Activated T-helper 1 cell treated with anti-CD3 and anti-CD28 coated beads, Interleukin-12 subunit alpha, Interleukin-12 subunit beta, Interleukin-2, Interleukin-4 antibody, amounts not matched to agents 30 ng/mL and 10 ng/mL and 1 ng/mL, durations not matched to agents 14 hours and 24 hours and 36 hours (primary cell): ENCODE measurements at regions of chr3 and their contacts with region 1.

Region 1: GRCh38 chr3:2148561-2149340 is 50.1 kb downstream of the CNTN4 start:
- DNase-seq: no peak
- H3K4me3 Mint-ChIP-seq: no peak overlapping the region
- H3K27ac Mint-ChIP-seq: no peak overlapping the region
- H3K4me1 Mint-ChIP-seq: no peaks in the 10 kb centered on the region
- H3K27me3 Mint-ChIP-seq: no peaks in the 10 kb centered on the region

Region 2: GRCh38 chr3:2023959-2024358 is 124.8 kb before region 1 on chr3:
- intact Hi-C with region 1: no loop called
- DNase-seq: no peak
- H3K4me3 Mint-ChIP-seq: no peak overlapping the region
- H3K27ac Mint-ChIP-seq: no peak overlapping the region
- H3K4me1 Mint-ChIP-seq: no peaks in the 10 kb centered on the region
- H3K27me3 Mint-ChIP-seq: no peaks in the 10 kb centered on the region

Region 3: DNA sequence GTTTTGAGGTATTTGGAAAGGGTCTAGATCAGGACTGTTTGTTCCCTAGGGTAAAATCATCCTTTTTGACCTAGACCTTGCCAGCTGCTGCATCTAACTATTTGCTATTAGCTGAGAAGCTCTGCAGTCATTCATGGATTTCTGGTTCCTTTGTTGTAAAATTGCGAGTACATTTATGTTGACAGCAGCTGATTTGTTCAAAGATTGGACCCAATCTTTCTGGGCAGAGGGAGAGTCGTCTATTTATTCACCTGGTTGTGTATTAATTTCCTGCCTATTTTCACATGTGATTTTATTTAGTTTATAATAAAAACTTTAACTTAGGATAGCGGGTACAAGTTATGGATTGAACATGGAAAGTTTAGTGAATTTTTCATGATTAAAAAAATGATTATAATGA is 186.2 kb after region 1 on chr3:
- intact Hi-C with region 1: loop called (anchors 10 kb)
- DNase-seq: no peak
- H3K4me3 Mint-ChIP-seq: no peak overlapping the region
- H3K27ac Mint-ChIP-seq: no peak overlapping the region
- H3K4me1 Mint-ChIP-seq: no peaks in the 10 kb centered on the region
- H3K27me3 Mint-ChIP-seq: no peaks in the 10 kb centered on the region